Adrenal gland (tissue), 19 donors: ENCODE measurements at regions of chr4 and their contacts with region 1.

Region 1: GRCh38 chr4:77044461-77045150 is 31.2 kb downstream of the CCNI start:
- DNase-seq: no peak
- H3K4me3 ChIP-seq: no peak overlapping the region
- H3K27ac ChIP-seq: peak overlapping the region in 2 of 5 donors; percentile 31 to 56
- H3K4me1 ChIP-seq: peaks cover 0 to 9% of the 10 kb centered on the region in 2 donors
- H3K27me3 ChIP-seq: no peaks in the 10 kb centered on the region
- CTCF ChIP-seq: peak; percentile 34 to 61 (median 54)
- POLR2A ChIP-seq: no peak

Region 2: DNA sequence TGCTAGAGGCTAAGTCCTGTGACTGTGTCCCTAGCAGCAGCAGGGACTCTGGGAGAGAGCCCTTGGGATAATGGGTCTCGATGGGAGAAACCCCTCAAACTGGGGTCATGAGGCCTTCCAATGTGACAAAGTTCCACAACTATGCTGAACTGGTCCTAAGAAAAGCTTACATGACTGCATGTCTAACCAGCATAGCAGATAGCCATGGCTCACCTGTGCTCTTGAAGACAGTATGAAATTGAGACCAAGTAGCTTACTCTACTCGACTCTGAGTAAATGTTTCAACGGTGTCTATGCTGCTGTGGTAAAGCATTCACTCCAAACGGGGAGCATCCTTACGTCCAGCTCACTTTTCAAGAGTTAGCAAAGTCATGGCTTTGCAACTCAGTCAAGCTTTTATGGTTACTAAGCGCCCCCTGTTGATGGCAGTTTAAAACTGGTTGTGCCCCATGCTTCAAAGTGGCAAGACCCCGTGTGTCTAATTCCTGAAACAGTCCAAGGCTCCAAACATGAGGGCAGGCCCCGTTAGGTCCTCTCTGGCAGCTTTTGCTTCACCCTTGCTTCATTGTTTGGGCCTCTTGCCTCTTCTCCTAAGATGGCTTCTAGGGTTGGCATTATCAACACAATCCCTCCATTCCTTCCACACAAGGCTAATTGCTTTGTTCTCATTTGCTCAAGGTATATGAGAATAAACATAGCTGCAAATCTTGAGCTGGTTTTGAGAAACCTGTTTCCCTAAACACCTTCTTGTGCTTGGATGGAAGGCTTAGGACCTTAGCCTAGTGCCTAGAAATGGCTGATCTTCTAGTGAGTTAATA is 159.0 kb after region 1 on chr4:
- intact Hi-C with region 1: loop called in 1 of 2 experiments (anchors 10 kb)
- DNase-seq: peak; percentile 63 to 82 (median 68)
- H3K4me3 ChIP-seq: no peak overlapping the region
- H3K27ac ChIP-seq: no peak overlapping the region
- H3K4me1 ChIP-seq: no peaks in the 10 kb centered on the region
- H3K27me3 ChIP-seq: no peaks in the 10 kb centered on the region
- CTCF ChIP-seq: peak; percentile 49 to 81 (median 75)
- POLR2A ChIP-seq: no peak